ENCODE measurements at regions of chr4 and their contacts with region 1.

Region 1: DNA sequence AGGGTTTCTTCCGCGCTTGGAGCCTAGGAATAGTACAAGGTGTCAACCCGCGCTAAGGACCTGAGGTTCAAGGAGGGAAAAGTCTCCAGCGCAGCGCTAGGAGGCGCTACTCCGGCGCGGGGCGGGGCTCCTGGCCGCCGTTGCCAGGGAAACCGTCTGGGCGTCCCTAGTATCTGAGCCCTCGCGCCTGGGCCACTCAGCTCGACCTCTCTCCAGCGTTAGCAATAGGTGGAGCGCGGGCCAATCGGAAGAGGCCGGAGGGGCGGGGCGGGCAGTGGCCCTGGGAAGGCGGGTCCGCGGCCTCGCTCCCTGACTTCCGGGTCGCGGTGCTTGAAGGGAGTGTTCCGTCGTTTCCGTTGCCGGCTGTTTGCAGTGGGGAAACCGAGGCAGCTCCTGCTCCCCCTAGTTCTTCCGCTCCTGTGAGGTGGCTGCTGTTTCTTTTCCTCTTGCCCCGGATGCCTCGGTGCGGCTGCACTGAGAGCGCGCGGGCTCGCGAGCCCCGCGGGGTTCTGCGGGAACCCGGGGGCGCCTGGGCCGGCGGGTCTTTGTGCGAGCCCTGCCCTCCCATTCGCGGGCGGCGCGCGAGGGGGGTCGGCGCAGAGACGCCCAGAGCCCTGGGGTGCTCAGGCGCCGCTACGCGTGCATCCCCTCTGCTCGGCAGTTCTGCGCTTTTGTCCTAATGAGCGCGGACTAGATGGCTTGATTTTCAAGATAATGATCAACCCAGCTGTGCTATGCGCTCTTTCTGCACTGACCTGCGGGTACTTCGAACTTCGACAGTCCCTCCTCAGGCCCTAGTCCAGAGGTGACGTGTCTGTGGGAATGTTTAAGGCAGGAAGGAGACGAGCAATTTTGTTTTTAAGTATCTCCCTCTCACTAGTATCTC is at the start of gene ELMOD2:
- DNase-seq: peak; percentile 96 to 97 (median 97)
- H3K4me3 ChIP-seq: peak within 1 kb of the TSS; percentile 37 to 90
- H3K4me3 Mint-ChIP-seq: peak within 1 kb of the TSS; percentile 81 to 95 (median 85)
- H3K27ac ChIP-seq: peak within 1 kb of the TSS; percentile 67
- H3K27ac Mint-ChIP-seq: peak within 1 kb of the TSS; percentile 82 to 93 (median 88)
- H3K4me1 ChIP-seq: peaks cover 20% of the 10 kb centered on the region
- H3K4me1 Mint-ChIP-seq: peaks cover 12 to 26% (median 20%) of the 10 kb centered on the region in 4 donors
- H3K27me3 ChIP-seq: no peaks in the 10 kb centered on the region
- H3K27me3 Mint-ChIP-seq: no peaks in the 10 kb centered on the region
- total RNA-seq, gene ELMOD2: 26.2 to 29.8 TPM

Region 2: DNA sequence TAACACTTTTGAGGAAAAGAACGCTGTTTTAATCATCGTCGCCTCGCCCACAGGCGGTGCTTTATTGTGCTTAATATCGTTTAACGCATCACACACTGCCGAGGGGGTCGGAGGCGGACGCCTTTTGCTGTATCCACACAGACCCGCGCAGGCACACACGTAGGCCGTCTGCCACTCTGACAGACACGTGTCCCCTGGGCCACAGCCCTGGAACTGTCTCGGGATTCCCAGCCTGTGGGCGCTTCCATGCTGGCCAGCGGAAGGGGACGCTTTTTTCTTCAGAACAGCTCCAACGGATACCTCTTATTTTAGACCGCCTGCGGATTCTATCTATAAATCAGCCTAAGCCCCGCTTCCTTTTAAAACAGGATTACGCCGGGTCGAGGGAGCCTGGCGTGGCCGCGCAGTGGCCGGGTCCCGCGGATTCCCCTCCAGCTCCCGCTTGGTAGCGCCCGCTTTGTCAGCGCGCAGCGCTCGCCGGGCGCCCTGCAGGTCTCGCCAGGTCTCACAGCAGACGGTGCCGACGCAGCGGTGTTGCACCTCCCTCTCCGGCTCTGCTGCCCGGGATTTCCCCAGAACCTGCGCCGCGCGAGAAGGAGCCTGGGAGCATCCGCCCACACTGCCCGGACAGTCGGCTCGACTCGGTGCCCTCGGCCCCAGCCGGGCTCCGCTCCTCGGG is 1508.7 kb before region 1 on chr4 and contains the start of gene NOCT:
- CTCF ChIA-PET with region 1: no interaction called
- POLR2A ChIA-PET with region 1: no interaction called
- intact Hi-C with region 1: loop called (anchors 5 kb)
- DNase-seq: peak; percentile 90 to 96 (median 93)
- H3K4me3 ChIP-seq: peak within 1 kb of the TSS; percentile 20 to 66
- H3K4me3 Mint-ChIP-seq: peak within 1 kb of the TSS; percentile 87 to 94 (median 90)
- H3K27ac ChIP-seq: peak within 1 kb of the TSS; percentile 84
- H3K27ac Mint-ChIP-seq: peak within 1 kb of the TSS; percentile 93 to 100 (median 99)
- H3K4me1 ChIP-seq: peaks cover 18% of the 10 kb centered on the region
- H3K4me1 Mint-ChIP-seq: peaks cover 13 to 44% (median 17%) of the 10 kb centered on the region in 4 donors
- H3K27me3 ChIP-seq: no peaks in the 10 kb centered on the region
- H3K27me3 Mint-ChIP-seq: no peaks in the 10 kb centered on the region
- total RNA-seq, gene NOCT: 1.4 to 1.7 TPM

Region 3: GRCh38 chr4:139177868-139178611 is 1346.1 kb before region 1 on chr4:
- CTCF ChIA-PET with region 1: no interaction called
- POLR2A ChIA-PET with region 1: no interaction called
- intact Hi-C with region 1: loop called (anchors 5 kb)
- DNase-seq: peak; percentile 92 to 94 (median 92)
- H3K4me3 ChIP-seq: peak overlapping the region; percentile 88 to 89
- H3K4me3 Mint-ChIP-seq: peak overlapping the region; percentile 89 to 94 (median 92)
- H3K27ac ChIP-seq: peak overlapping the region; percentile 96
- H3K27ac Mint-ChIP-seq: peak overlapping the region; percentile 92 to 97 (median 96)
- H3K4me1 ChIP-seq: peaks cover 17% of the 10 kb centered on the region
- H3K4me1 Mint-ChIP-seq: peaks cover 14 to 29% (median 18%) of the 10 kb centered on the region in 4 donors
- H3K27me3 ChIP-seq: no peaks in the 10 kb centered on the region
- H3K27me3 Mint-ChIP-seq: no peaks in the 10 kb centered on the region

Region 4: GRCh38 chr4:139841464-139842246 is 682.4 kb before region 1 on chr4:
- CTCF ChIA-PET with region 1: no interaction called
- POLR2A ChIA-PET with region 1: no interaction called
- intact Hi-C with region 1: no loop called
- DNase-seq: no peak
- H3K4me3 ChIP-seq: no peak overlapping the region
- H3K4me3 Mint-ChIP-seq: no peak overlapping the region
- H3K27ac ChIP-seq: no peak overlapping the region
- H3K27ac Mint-ChIP-seq: no peak overlapping the region
- H3K4me1 ChIP-seq: no peaks in the 10 kb centered on the region
- H3K4me1 Mint-ChIP-seq: no peaks in the 10 kb centered on the region
- H3K27me3 ChIP-seq: no peaks in the 10 kb centered on the region
- H3K27me3 Mint-ChIP-seq: peaks cover 1 to 6% of the 10 kb centered on the region in 2 donors

Region 5: DNA sequence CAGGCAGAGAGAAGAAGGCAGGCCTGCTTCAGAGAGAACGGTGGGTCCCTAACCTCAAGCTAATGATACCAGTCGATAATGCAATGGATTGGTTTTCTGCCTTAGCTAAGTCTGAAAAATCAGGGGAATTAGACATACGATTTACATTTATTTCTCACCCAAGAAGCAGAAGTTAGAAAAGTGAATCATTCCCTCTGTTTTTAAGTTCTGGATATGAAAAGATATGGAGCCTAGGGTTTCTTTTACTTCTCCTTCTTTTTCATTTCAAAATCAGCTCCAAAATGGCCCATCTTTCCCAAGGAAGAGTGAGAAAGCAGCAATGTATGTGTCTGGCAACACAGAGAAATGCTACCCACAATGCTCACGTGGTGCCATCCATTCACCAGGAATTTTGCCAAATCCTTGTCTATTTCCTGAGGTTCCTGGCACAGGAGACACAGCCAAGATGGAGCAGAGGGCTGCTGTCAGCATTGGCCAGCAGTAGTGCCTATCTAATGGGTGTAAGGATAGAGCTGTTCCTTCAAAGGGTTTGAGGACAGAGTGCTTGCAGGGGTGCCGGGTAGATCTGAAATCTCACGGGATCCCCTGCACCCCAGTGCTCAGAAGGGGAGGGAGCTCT is 601.6 kb before region 1 on chr4:
- CTCF ChIA-PET with region 1: no interaction called
- POLR2A ChIA-PET with region 1: no interaction called
- intact Hi-C with region 1: no loop called
- DNase-seq: no peak
- H3K4me3 ChIP-seq: no peak overlapping the region
- H3K4me3 Mint-ChIP-seq: no peak overlapping the region
- H3K27ac ChIP-seq: no peak overlapping the region
- H3K27ac Mint-ChIP-seq: no peak overlapping the region
- H3K4me1 ChIP-seq: no peaks in the 10 kb centered on the region
- H3K4me1 Mint-ChIP-seq: no peaks in the 10 kb centered on the region
- H3K27me3 ChIP-seq: no peaks in the 10 kb centered on the region
- H3K27me3 Mint-ChIP-seq: no peaks in the 10 kb centered on the region

Region 6: GRCh38 chr4:140373328-140374129 is 150.6 kb before region 1 on chr4 and contains the start of gene SCOC:
- CTCF ChIA-PET with region 1: interaction called, 21 read pairs
- POLR2A ChIA-PET with region 1: interaction called, 17 read pairs
- intact Hi-C with region 1: loop called (anchors 1 kb)
- DNase-seq: peak; percentile 95 to 99 (median 96)
- H3K4me3 ChIP-seq: peak within 1 kb of the TSS; percentile 72 to 75
- H3K4me3 Mint-ChIP-seq: peak within 1 kb of the TSS in 3 of 8 donors; percentile 83 to 90 (median 87)
- H3K27ac ChIP-seq: peak within 1 kb of the TSS; percentile 69
- H3K27ac Mint-ChIP-seq: peak within 1 kb of the TSS in 6 of 7 donors; percentile 47 to 87 (median 76)
- H3K4me1 ChIP-seq: peaks cover 23% of the 10 kb centered on the region
- H3K4me1 Mint-ChIP-seq: peaks cover 24 to 37% (median 28%) of the 10 kb centered on the region in 4 donors
- H3K27me3 ChIP-seq: no peaks in the 10 kb centered on the region
- H3K27me3 Mint-ChIP-seq: no peaks in the 10 kb centered on the region
- total RNA-seq, gene SCOC: 21.8 to 22.8 TPM

Region 7: GRCh38 chr4:141220655-141221605 is 696.8 kb after region 1 on chr4 and contains the start of gene ZNF330:
- CTCF ChIA-PET with region 1: no interaction called
- POLR2A ChIA-PET with region 1: no interaction called
- intact Hi-C with region 1: loop called (anchors 5 kb)
- DNase-seq: peak; percentile 81 to 92 (median 87)
- H3K4me3 ChIP-seq: peak within 1 kb of the TSS; percentile 42 to 95
- H3K4me3 Mint-ChIP-seq: peak within 1 kb of the TSS; percentile 96 to 99 (median 98)
- H3K27ac ChIP-seq: peak within 1 kb of the TSS; percentile 92
- H3K27ac Mint-ChIP-seq: peak within 1 kb of the TSS; percentile 93 to 99 (median 97)
- H3K4me1 ChIP-seq: peaks cover 22% of the 10 kb centered on the region
- H3K4me1 Mint-ChIP-seq: peaks cover 27 to 49% (median 37%) of the 10 kb centered on the region in 4 donors
- H3K27me3 ChIP-seq: no peaks in the 10 kb centered on the region
- H3K27me3 Mint-ChIP-seq: no peaks in the 10 kb centered on the region
- total RNA-seq, gene ZNF330: 39.8 to 45.3 TPM

Region 8: DNA sequence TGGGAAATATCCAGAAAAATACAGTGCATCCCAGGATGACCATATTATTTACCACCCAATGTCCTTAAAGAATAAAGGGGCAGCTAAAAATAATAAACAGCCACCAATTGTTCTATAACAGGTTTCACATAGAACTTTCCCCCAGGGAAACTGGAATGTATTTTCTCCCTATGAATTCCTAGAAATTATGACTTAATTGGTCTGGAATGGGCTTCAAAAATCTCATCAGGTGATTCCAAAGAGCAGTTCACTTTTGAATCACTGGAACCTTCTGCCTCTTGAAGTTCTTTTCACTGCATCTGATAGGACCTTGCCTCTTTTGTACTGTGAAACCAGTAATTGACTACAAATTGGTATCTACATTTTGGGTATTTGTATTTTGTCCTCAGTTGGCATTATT is 815.9 kb after region 1 on chr4:
- CTCF ChIA-PET with region 1: no interaction called
- POLR2A ChIA-PET with region 1: no interaction called
- intact Hi-C with region 1: no loop called
- DNase-seq: no peak
- H3K4me3 ChIP-seq: no peak overlapping the region
- H3K4me3 Mint-ChIP-seq: no peak overlapping the region
- H3K27ac ChIP-seq: no peak overlapping the region
- H3K27ac Mint-ChIP-seq: no peak overlapping the region
- H3K4me1 ChIP-seq: no peaks in the 10 kb centered on the region
- H3K4me1 Mint-ChIP-seq: no peaks in the 10 kb centered on the region
- H3K27me3 ChIP-seq: no peaks in the 10 kb centered on the region
- H3K27me3 Mint-ChIP-seq: peaks cover 13 to 21% of the 10 kb centered on the region in 2 donors

Measured in CD4-positive, alpha-beta memory T cell (primary cell).